ENCODE measurements at regions of chr3 and their contacts with region 1.

Region 1: DNA sequence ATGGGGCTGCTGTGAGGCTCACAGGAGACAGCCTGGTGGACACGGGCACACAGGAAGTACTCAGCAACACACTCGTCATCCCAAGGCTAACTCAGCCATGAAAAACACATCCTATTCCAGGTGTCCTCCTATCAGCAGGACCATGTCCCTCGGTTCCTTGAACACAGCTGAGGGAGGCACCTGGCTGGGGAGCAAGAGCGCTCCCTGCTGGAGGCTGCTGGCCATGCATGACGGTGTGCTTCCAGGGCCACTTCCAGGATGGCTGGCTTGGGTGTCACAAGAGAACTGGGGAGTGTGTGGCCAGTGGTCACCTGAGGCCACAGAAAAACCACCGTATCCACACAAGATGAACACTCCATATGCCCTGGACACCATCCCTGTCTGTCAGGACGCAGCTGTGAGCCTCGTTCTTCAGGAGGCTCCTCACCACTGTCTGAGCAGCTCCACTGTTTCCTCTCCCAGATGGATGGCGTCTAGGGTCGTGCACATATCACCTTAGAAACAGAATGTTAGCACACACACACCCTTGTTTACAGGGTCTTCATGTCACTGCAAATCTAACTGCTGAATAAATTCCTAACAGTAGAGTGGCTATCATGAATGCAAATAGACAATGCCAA is 31.0 kb downstream of the POC1A start:
- DNase-seq: peak; percentile 77 to 83
- ATAC-seq: peak; percentile 69 to 89 (median 84)
- H3K4me3 ChIP-seq: no peak overlapping the region
- H3K27ac ChIP-seq: peak overlapping the region in 9 of 10 donors; percentile 41 to 91 (median 86)
- H3K4me1 ChIP-seq: peaks cover 15 to 50% (median 34%) of the 10 kb centered on the region in 9 donors
- H3K27me3 ChIP-seq: no peaks in the 10 kb centered on the region
- CTCF ChIP-seq: peak; percentile 93 to 99 (median 97)

Region 2: GRCh38 chr3:52068055-52068571 is 55.1 kb before region 1 on chr3:
- intact Hi-C with region 1: loop called in 1 of 10 experiments (anchors 5 kb)
- DNase-seq: no peak
- ATAC-seq: no peak
- H3K4me3 ChIP-seq: no peak overlapping the region
- H3K27ac ChIP-seq: peak overlapping the region in 4 of 10 donors; percentile 19 to 41 (median 32)
- H3K4me1 ChIP-seq: peaks cover 15 to 49% (median 29%) of the 10 kb centered on the region in 9 donors
- H3K27me3 ChIP-seq: no peaks in the 10 kb centered on the region
- CTCF ChIP-seq: no peak

Region 3: GRCh38 chr3:52090131-52090932 is 32.9 kb before region 1 on chr3:
- intact Hi-C with region 1: loop called in 1 of 10 experiments (anchors 1 kb)
- DNase-seq: peak in 1 of 2 donors; percentile 33
- ATAC-seq: peak in 6 of 8 donors; percentile 35 to 67 (median 48)
- H3K4me3 ChIP-seq: no peak overlapping the region
- H3K27ac ChIP-seq: peak overlapping the region; percentile 3 to 77 (median 62)
- H3K4me1 ChIP-seq: peaks cover 15 to 71% (median 57%) of the 10 kb centered on the region in 9 donors
- H3K27me3 ChIP-seq: no peaks in the 10 kb centered on the region
- CTCF ChIP-seq: no peak

Region 4: DNA sequence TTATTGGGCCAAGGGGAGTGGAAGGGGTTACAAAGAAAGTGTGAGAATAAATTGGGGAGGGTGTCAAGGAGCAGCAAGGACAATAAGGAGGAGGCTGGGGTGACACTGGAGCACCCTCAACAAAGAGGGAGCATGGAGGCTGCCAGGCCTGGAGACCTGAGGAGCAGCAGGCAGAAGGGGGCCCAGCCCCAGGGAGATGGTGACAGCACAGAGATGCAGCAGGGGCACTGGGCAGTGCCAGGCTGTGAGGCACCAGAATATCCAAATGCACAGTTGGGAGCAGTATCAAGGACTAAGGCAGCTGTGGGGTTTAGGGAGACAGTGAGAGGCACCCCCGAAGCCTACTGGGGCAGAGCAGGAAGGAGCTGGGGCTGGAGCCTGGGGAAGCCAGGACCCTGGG is 55.3 kb after region 1 on chr3:
- intact Hi-C with region 1: no loop called
- DNase-seq: no peak
- ATAC-seq: no peak
- H3K4me3 ChIP-seq: no peak overlapping the region
- H3K27ac ChIP-seq: no peak overlapping the region
- H3K4me1 ChIP-seq: peaks cover 4 to 25% (median 17%) of the 10 kb centered on the region in 9 donors
- H3K27me3 ChIP-seq: no peaks in the 10 kb centered on the region
- CTCF ChIP-seq: no peak

Region 5: GRCh38 chr3:52190294-52191074 is 67.3 kb after region 1 on chr3:
- intact Hi-C with region 1: no loop called
- DNase-seq: peak; percentile 23 to 41
- ATAC-seq: peak; percentile 11 to 48 (median 20)
- H3K4me3 ChIP-seq: no peak overlapping the region
- H3K27ac ChIP-seq: peak overlapping the region in 4 of 10 donors; percentile 51 to 65 (median 57)
- H3K4me1 ChIP-seq: peaks cover 5 to 50% (median 26%) of the 10 kb centered on the region in 9 donors
- H3K27me3 ChIP-seq: no peaks in the 10 kb centered on the region
- CTCF ChIP-seq: no peak

Region 6: DNA sequence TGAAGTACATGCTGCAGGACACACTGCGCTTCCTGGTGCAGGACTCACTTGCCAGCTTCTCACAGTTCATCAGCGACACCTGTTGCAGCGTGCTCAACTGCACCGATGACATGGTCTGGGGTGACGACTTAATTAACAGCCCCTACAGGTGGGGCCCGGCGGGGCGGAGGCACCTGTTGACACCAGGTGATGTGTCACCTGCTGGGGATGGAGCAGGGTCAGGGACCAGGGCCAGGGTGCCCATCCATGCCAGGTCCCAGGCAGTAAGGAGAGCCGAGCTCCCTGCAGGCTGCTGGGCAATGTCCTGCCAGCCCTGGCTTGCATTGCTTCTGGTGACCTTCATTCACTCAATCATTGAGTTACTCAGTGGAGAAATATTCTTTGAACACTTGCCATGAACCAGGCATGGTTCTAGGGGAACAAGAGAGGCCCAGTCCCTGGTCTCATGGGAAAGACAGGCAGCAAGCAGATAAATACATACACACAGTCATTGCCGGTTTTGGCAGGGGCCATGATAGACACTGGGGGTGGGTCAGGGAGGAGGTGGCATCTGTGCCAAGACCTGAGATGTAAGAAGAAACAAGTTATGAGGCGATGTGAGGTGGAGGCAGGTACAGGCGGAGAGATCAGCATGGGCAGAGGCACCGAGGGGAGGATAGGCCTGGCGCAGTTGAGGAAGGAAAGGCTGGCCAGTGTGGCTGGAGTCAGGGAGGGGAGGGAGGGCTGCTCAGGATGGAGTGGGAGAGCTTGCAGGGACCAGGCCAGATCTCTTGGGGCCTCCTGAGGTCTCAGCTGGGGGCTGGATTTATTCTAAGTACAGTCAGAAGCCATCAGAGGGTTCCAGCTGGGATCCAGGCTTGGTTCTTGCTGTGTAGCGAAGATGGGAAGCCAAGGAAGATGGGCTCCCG is 223.7 kb after region 1 on chr3:
- intact Hi-C with region 1: no loop called
- DNase-seq: peak; percentile 47 to 53
- ATAC-seq: peak; percentile 53 to 88 (median 80)
- H3K4me3 ChIP-seq: no peak overlapping the region
- H3K27ac ChIP-seq: peak overlapping the region in 6 of 10 donors; percentile 27 to 69 (median 51)
- H3K4me1 ChIP-seq: peaks cover 0 to 25% (median 7%) of the 10 kb centered on the region in 9 donors
- H3K27me3 ChIP-seq: no peaks in the 10 kb centered on the region
- CTCF ChIP-seq: no peak

Measured in heart right ventricle (tissue), 16 donors.